Activated T-helper 1 cell treated with anti-CD3 and anti-CD28 coated beads, Interleukin-12 subunit alpha, Interleukin-12 subunit beta, Interleukin-2, Interleukin-4 antibody, amounts not matched to agents 30 ng/mL and 10 ng/mL and 1 ng/mL, durations not matched to agents 14 hours and 24 hours and 36 hours (primary cell): ENCODE measurements at regions of chr10 and their contacts with region 1.

Region 1: GRCh38 chr10:101060036-101060950 is 1.5 kb upstream of the KAZALD1 start:
- DNase-seq: peak; percentile 84
- H3K4me3 Mint-ChIP-seq: peak overlapping the region; percentile 92
- H3K27ac Mint-ChIP-seq: peak overlapping the region; percentile 91
- H3K4me1 Mint-ChIP-seq: peaks cover 33% of the 10 kb centered on the region
- H3K27me3 Mint-ChIP-seq: peaks cover 22% of the 10 kb centered on the region

Region 2: GRCh38 chr10:100912605-100913469 is 147.5 kb before region 1 on chr10 and contains the start of gene SLF2:
- intact Hi-C with region 1: loop called (anchors 10 kb)
- DNase-seq: peak; percentile 94
- H3K4me3 Mint-ChIP-seq: peak within 1 kb of the TSS; percentile 97
- H3K27ac Mint-ChIP-seq: peak within 1 kb of the TSS; percentile 95
- H3K4me1 Mint-ChIP-seq: peaks cover 48% of the 10 kb centered on the region
- H3K27me3 Mint-ChIP-seq: no peaks in the 10 kb centered on the region
- total RNA-seq, gene SLF2: 33.4 and 36.1 TPM in 2 replicates

Region 3: GRCh38 chr10:101031128-101031795 is 29.0 kb before region 1 on chr10 and contains the starts of genes PDZD7 and SFXN3:
- intact Hi-C with region 1: loop called (anchors 1 kb)
- DNase-seq: peak; percentile 94
- H3K4me3 Mint-ChIP-seq: peak within 1 kb of the TSS; percentile 84
- H3K27ac Mint-ChIP-seq: peak within 1 kb of the TSS; percentile 94
- H3K4me1 Mint-ChIP-seq: peaks cover 27% of the 10 kb centered on the region
- H3K27me3 Mint-ChIP-seq: peaks cover 21% of the 10 kb centered on the region
- total RNA-seq, gene PDZD7: 0.47 and 0.54 TPM in 2 replicates
- total RNA-seq, gene SFXN3: 34.8 and 39.0 TPM in 2 replicates

Region 4: GRCh38 chr10:101095542-101096213 is 35.4 kb after region 1 on chr10:
- intact Hi-C with region 1: loop called (anchors 2 kb)
- DNase-seq: peak; percentile 69
- H3K4me3 Mint-ChIP-seq: no peak overlapping the region
- H3K27ac Mint-ChIP-seq: no peak overlapping the region
- H3K4me1 Mint-ChIP-seq: peaks cover 6% of the 10 kb centered on the region
- H3K27me3 Mint-ChIP-seq: peaks cover 21% of the 10 kb centered on the region

Region 5: DNA sequence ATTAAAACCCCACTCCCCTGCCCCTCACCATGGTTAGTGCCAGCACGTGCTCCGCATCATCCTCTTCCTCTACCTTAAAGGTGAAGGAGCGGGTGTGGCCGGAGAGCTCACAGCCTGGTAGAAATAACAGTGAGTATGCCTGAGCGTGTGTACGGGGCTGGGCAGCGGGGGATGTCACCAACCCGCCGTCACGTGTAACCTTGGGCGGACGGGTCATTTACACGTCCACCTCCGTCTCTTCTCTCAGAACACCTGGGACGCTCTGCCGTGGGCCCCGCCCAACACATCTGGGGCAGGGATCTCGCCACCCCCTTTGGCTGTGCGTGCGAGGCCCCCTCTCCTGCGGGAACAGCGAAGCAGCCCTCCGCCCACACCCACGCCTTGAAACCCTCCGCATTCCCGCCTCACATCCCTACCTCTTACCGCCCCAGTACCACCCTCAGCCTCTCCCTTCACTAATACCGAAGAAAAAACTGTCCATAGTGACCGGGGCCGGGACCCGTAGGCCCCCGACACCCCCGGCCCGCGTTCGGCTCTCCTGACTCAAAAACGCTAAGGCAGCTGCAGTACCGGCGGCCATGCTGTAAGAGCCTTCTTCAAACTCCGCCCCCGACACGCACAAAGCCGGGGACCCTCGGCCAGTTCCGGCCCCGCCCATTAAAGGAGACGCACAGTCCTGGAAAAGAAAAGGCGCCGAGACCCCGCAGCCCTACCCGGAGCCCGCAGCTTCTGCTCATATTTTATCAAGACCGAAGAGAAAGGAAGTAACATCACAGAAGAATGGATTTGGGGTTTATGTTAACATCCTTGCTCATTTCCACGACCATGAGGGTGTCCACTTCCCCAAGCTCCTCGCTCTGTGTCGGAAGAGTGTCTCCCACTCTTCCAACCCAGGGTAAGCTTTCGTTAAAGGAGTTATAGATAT is 722.8 kb after region 1 on chr10 and contains the start of gene NPM3:
- intact Hi-C with region 1: loop called (anchors 10 kb)
- DNase-seq: peak; percentile 78
- H3K4me3 Mint-ChIP-seq: peak within 1 kb of the TSS; percentile 100
- H3K27ac Mint-ChIP-seq: peak within 1 kb of the TSS; percentile 99
- H3K4me1 Mint-ChIP-seq: peaks cover 59% of the 10 kb centered on the region
- H3K27me3 Mint-ChIP-seq: peaks cover 5% of the 10 kb centered on the region
- total RNA-seq, gene NPM3: 149 and 151 TPM in 2 replicates